ENCODE measurements at regions of chr5 and their contacts with region 1.

Region 1: GRCh38 chr5:157431544-157432200 is 28.3 kb upstream of the NIPAL4 start:
- DNase-seq: peak; percentile 30
- H3K4me3 Mint-ChIP-seq: no peak overlapping the region
- H3K27ac Mint-ChIP-seq: no peak overlapping the region
- H3K4me1 Mint-ChIP-seq: peaks cover 8% of the 10 kb centered on the region
- H3K27me3 Mint-ChIP-seq: peaks cover 1% of the 10 kb centered on the region

Region 2: GRCh38 chr5:157443041-157443549 is 11.4 kb after region 1 on chr5:
- CTCF ChIA-PET with region 1: interaction called, 10 read pairs
- POLR2A ChIA-PET with region 1: no interaction called
- intact Hi-C with region 1: no loop called
- DNase-seq: no peak
- H3K4me3 Mint-ChIP-seq: no peak overlapping the region
- H3K27ac Mint-ChIP-seq: no peak overlapping the region
- H3K4me1 Mint-ChIP-seq: no peaks in the 10 kb centered on the region
- H3K27me3 Mint-ChIP-seq: no peaks in the 10 kb centered on the region

Region 3: DNA sequence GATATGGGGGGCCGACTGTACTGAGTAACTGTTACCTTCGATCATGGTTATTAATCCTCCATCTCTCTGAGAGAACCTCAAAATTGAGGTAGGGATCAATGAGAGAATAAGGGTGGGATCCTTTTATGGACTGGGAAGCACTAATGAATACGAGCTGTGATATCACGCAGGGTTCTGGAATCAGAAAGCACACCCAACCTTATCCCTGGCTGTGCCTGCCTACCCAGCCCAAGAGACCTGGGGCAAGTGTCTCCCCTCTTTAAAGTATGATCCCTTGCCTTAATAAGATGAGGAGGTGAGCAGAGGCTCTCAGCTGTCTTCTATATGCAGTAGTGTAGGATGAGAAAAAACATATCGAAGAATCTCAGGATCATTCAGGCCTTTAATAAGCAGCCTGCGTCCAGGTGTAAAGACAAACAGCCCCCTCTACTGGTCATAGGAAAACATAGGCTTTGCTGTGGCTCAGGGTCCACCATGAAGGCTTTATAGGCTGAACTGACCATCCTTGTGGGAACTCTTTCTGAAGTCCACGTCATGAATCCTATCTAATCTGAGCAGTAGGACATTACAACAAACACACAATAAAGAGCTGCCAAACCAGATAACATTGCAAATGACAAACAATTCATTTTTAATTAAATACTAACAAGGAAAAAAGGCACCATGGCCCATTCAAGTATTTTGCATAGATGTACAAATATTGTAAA is 45.2 kb after region 1 on chr5:
- CTCF ChIA-PET with region 1: interaction called, 128 read pairs
- POLR2A ChIA-PET with region 1: no interaction called
- intact Hi-C with region 1: loop called (anchors 1 kb)
- DNase-seq: peak; percentile 33
- H3K4me3 Mint-ChIP-seq: no peak overlapping the region
- H3K27ac Mint-ChIP-seq: peak overlapping the region; percentile 40
- H3K4me1 Mint-ChIP-seq: peaks cover 27% of the 10 kb centered on the region
- H3K27me3 Mint-ChIP-seq: no peaks in the 10 kb centered on the region

Region 4: DNA sequence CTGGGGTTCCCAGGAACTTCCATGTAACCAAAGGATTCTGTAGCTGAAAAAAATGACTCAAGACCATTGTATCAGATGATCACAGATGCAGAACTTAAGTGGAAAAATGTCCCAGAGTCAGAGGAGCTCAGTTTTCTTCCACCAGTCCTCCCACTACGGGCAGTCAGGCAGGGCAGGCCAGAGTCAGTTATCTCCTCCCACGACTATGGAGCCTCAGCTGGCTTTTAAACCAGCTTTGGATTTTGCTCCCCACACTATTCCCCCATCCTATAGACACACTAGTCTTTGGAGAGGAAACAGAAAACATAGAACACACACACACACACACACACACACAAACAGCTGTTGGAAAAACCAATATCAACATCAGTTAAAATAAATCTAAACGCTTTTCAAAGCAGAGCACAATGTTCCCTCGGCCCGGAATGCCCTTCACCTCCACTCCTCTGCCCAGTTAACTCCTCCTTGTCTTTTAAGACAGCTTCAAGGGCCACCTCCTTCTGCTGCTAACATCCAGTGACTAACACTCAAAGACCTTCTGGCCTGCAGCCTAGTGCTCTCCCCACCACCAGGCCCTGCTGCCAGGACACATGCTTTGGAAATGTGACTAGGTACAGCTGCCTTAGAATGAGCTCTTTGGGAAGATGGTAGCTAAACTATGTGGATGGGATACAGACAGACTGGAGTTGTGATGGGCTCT is 85.1 kb after region 1 on chr5:
- CTCF ChIA-PET with region 1: no interaction called
- POLR2A ChIA-PET with region 1: no interaction called
- intact Hi-C with region 1: no loop called
- DNase-seq: no peak
- H3K4me3 Mint-ChIP-seq: peak overlapping the region; percentile 7
- H3K27ac Mint-ChIP-seq: peak overlapping the region; percentile 55
- H3K4me1 Mint-ChIP-seq: peaks cover 39% of the 10 kb centered on the region
- H3K27me3 Mint-ChIP-seq: no peaks in the 10 kb centered on the region

Measured in activated CD4-positive, alpha-beta memory T cell treated with anti-CD3 and anti-CD28 coated beads for 36 hours (primary cell).